ENCODE measurements at regions of chr10 and their contacts with region 1.

Region 1: DNA sequence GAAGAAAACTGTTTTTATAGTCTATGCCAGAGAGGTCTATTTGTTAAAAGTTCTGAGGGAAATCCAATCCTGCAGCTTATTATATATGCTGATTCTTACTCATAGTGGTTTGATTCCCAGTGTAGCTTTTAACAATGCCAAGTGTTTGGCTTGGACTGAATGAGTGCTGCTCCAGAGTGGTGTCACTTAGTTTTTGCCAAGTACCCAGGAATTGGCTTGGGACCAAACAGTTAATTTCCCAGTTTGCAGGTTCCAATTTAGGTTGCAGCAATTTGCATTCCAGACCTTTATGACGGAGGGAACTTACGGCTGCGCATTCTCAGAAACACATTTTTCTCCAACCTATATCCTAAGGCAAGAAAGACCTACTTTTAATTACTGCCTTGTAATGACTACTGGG is 32.4 kb downstream of the NSUN6 start:
- DNase-seq: peak in 1 of 2 donors; percentile 34
- H3K4me3 ChIP-seq: no peak overlapping the region
- H3K27ac ChIP-seq: no peak overlapping the region
- H3K4me1 ChIP-seq: no peaks in the 10 kb centered on the region
- H3K27me3 ChIP-seq: no peaks in the 10 kb centered on the region
- CTCF ChIP-seq: no peak
- POLR2A ChIP-seq: no peak

Region 2: GRCh38 chr10:18777258-18777657 is 158.2 kb after region 1 on chr10:
- intact Hi-C with region 1: loop called (anchors 5 kb)
- DNase-seq: no peak
- H3K4me3 ChIP-seq: no peak overlapping the region
- H3K27ac ChIP-seq: no peak overlapping the region
- H3K4me1 ChIP-seq: no peaks in the 10 kb centered on the region
- H3K27me3 ChIP-seq: no peaks in the 10 kb centered on the region
- CTCF ChIP-seq: no peak
- POLR2A ChIP-seq: no peak

Measured in breast epithelium (tissue), 4 donors.